Posterior vena cava (tissue), 2 donors: ENCODE measurements at regions of chr6 and their contacts with region 1.

Region 1: DNA sequence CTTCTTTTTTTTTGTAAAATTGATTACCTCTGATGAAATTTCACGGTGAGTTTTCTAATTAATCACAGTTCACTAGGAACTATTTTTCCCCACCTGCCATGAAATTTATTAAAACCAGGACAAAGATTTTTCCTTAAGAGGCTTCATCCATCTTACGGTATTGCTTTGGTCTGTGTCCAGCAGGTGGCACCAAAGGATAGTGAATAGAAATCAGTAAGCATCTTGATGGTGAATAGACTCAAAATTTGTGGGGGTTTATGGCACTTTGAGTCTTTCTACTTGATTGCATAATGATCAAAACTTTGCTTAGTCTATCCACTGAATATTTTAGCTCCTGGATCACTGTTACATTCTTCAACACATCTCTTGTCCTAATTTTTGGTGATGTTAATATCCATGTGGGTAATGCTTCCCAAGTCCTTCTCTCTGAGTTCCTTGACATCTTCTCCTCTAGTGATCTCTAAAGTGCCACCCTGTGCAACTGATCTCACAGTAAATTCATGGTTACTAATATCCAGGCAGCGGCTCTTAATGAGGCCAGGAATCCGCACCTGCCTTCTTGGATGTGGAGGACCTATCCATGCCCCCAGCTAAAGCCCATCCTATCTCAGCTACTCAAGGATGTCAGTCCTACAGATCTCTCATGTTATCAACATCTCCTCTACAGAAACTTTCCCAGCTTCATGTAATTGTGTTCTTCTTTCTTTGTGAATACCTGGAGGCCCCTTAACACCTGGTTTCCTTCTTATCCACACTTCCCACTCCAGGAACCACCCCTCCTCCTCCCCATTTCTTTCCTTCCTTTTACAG is 54.5 kb downstream of the STMND1 start:
- DNase-seq: no peak

Region 2: DNA sequence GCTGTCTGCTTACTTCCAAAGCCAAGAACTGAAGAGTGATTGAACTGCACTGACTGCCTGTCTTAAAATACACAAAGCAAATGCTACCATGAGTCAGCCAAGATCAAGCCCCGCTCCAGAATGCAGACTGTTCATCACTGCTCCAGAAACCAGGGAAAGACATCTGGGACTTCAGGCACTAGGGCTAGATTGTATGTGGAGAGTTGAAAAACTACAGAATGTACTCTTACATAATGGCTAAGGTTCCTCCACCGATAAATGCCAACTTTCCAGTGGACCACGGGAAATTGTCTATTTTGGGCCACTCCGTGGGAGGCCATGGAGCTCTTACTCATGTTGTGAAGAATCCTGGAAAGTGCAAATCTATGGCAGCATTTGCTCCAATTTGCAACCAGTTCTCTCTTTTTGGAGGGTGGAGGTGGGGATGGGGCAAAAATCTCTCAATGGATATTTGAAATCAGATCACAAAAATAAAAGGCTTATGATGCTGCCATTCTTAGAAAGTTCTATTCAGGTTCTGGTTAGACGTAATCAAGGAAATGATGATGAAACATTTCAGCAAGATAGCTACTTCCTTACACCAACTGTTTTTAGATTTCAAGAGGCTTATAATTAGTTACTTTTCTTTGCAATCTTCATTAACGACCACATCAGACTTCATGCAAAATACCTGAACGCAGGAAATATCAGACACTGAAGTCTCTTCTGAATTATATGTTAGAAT is 225.3 kb after region 1 on chr6:
- intact Hi-C with region 1: no loop called
- DNase-seq: no peak

Region 3: DNA sequence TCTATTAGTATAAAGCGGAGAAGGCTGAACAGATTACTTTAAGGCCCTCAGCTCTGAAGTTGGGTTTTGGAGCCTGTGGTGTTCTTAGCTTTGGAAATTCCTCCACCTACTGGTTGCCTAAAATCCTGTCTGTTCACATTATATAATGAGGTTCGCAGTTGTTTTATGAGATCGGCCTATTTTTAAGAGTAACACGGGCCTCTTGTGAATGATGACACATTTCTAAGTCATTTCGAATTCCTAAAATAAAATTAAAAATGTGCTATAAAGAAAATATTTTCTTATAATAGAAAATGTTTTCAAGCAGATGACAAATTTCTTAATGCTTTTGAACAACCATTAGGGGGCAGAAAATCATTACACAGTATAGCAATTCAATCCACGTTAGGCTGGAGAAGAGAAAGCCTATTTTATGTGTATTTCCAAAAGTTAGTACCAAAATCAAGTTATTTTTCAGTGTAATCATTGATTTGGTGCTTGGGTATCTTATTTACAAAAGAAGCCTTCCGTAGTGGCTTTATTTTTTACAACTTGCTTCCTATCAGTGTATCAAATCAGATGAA is 428.0 kb after region 1 on chr6:
- intact Hi-C with region 1: loop called (anchors 5 to 10 kb)
- DNase-seq: no peak

Region 4: DNA sequence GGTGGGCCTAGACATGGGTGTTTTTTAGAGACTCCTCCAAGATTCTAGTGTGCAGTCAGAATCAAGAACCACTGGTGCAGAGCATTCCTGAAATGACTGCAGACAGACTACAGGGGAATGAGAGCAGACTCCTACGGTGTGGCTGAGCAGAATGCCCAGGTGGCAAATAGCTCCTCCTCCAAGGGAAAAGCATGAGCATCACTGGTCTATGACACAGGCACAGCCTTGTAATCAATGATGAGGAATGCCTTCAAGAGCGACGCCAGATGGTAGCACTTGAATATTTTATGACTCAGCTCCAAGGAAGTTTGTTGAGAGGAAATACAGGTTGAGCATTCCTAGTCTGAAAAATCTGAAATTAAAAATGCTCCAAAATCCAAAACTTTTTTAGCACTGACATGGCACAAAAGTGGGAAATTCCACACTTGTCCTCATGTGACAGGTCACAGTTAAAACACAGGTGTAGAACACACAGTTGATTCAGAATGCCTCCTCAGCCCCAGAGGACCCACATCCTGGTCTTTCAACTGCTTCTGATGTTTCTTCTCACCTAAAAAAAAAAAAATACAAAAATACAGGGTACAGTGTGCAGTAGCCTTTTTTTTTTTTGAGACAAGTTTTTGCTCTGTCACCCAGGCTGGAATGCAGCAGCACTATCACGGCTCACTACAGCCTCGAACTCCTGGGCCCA is 433.2 kb after region 1 on chr6:
- intact Hi-C with region 1: loop called (anchors 5 to 10 kb)
- DNase-seq: no peak

Region 5: DNA sequence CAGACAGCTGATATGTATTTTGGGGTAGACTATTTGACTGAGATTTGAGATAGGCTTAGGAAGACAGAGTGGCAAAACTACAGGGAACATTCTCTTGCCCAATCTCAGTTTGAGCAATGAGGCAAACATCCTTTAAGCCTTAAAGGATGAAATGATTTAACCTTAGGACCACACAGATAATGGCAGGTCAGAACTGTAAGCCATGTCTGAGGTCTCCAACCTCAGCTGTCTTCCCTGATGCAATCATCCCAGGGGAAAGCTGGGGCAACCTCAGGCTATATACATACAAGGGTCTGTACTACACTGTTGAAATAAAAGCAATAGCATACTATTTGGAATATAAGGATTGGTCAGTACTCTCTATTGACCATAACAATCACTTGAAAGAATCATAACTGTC is 634.2 kb after region 1 on chr6:
- intact Hi-C with region 1: loop called in 1 of 2 experiments (anchors 10 kb)
- DNase-seq: no peak

Region 6: GRCh38 chr6:17808609-17809008 is 652.3 kb after region 1 on chr6:
- intact Hi-C with region 1: loop called in 1 of 2 experiments (anchors 10 kb)
- DNase-seq: no peak